ENCODE measurements at regions of chr2 and their contacts with region 1.

Region 1: GRCh38 chr2:159286709-159287441 is 372 bp upstream of the WDSUB1 start:
- DNase-seq: peak; percentile 95 to 99 (median 97)
- H3K4me3 ChIP-seq: peak overlapping the region; percentile 70 to 94 (median 91)
- H3K4me3 Mint-ChIP-seq: peak overlapping the region; percentile 89 to 94
- H3K27ac ChIP-seq: peak overlapping the region; percentile 91 to 92
- H3K27ac Mint-ChIP-seq: peak overlapping the region; percentile 92 to 97 (median 96)
- H3K4me1 ChIP-seq: peaks cover 23 to 37% of the 10 kb centered on the region in 2 donors
- H3K4me1 Mint-ChIP-seq: peaks cover 34% of the 10 kb centered on the region
- H3K27me3 ChIP-seq: no peaks in the 10 kb centered on the region
- H3K27me3 Mint-ChIP-seq: peaks cover 0 to 2% (median 0%) of the 10 kb centered on the region in 3 donors
- CTCF ChIP-seq: no peak

Region 2: GRCh38 chr2:159249984-159250715 is 36.7 kb before region 1 on chr2:
- intact Hi-C with region 1: loop called in 1 of 2 experiments (anchors 5 kb)
- DNase-seq: peak; percentile 76 to 89 (median 89)
- H3K4me3 ChIP-seq: peak overlapping the region; percentile 6 to 54 (median 23)
- H3K4me3 Mint-ChIP-seq: peak overlapping the region; percentile 60 to 80
- H3K27ac ChIP-seq: peak overlapping the region; percentile 72 to 85
- H3K27ac Mint-ChIP-seq: peak overlapping the region; percentile 84 to 96 (median 91)
- H3K4me1 ChIP-seq: peaks cover 18 to 25% of the 10 kb centered on the region in 2 donors
- H3K4me1 Mint-ChIP-seq: peaks cover 20% of the 10 kb centered on the region
- H3K27me3 ChIP-seq: no peaks in the 10 kb centered on the region
- H3K27me3 Mint-ChIP-seq: no peaks in the 10 kb centered on the region
- CTCF ChIP-seq: no peak

Measured in CD14-positive monocyte (primary cell).